GM18951 (cell line): ENCODE measurements at regions of chr3 and their contacts with region 1.

Region 1: DNA sequence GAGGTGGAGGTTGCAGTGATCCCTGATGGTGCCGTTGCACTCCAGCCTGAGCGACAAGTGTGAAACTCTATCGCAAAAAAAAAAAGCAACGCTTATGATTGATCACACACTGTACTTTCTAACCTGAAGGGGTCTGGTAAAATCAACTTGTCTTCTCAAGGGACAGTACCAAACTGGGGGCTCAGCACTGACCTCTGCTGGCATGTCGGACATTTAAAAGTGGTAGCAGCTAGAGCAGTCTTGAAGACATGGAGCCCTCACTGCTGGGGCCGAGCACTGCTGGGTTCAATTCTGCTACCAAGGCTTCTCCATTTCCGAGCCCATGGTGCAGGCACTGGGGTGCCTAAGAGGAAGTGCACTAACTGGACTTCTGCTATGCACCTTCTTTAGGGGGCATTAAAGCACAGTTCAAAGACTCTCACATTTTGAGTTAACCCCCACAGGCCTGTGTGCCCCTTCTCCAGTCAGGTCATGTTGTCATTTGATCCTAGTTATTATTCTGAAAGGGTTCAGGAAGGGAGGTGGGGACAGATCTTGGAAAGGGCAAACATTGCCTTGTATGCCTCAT is 26.4 kb upstream of the LAMP3 start:
- POLR2A ChIP-seq: no peak

Region 2: DNA sequence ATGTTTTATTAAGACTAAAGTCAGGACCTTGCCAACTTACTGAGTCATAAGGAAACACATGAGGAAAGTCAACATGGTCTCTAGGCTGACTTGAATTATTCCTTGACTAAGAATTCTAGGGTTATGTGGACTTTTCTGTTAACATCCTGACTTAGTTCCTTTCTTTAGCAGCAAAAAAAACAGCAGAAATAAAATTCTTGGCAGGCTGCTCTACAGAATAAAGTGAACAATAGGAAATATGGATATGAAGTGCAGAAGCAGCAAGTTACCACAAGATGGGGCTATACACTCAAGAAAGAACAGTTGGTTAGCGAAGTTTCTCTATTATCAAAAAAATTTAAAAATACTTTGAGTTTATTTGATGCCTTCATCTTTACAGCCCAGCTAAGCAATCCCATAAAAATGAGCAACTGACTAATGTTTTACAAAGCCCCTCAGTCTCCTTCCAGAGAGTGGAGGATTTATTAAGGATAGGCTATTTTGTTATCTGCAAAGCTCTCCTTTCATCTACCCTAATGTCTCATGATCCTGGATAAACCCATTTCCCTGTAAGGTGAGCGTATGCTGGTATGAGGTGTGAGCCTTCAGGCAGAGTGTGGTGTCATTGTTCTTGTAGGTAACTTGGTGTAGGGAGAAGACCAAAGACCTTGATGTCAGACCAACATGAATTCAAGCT is 66.6 kb before region 1 on chr3:
- in situ Hi-C with region 1: loop called (anchors 10 kb)
- POLR2A ChIP-seq: no peak